Activated T-helper 2 cell treated with anti-CD3 and anti-CD28 coated beads, Interferon-gamma antibody, Interleukin-2, Interleukin-4, amounts not matched to agents 10 μg/mL and 5 μg/mL and 100 μg/mL, durations not matched to agents 14 hours and 24 hours and 36 hours (primary cell): ENCODE measurements at regions of chr2 and their contacts with region 1.

Region 1: GRCh38 chr2:174487108-174487819 is 435 bp upstream of the GPR155 start:
- DNase-seq: peak; percentile 85
- H3K4me3 Mint-ChIP-seq: peak overlapping the region; percentile 87
- H3K27ac Mint-ChIP-seq: peak overlapping the region; percentile 79
- H3K4me1 Mint-ChIP-seq: peaks cover 52% of the 10 kb centered on the region
- H3K27me3 Mint-ChIP-seq: peaks cover 7% of the 10 kb centered on the region

Region 2: GRCh38 chr2:174248187-174248997 is 238.9 kb before region 1 on chr2 and contains the start of gene OLA1:
- intact Hi-C with region 1: loop called (anchors 5 kb)
- DNase-seq: peak; percentile 94
- H3K4me3 Mint-ChIP-seq: peak within 1 kb of the TSS; percentile 87
- H3K27ac Mint-ChIP-seq: peak within 1 kb of the TSS; percentile 86
- H3K4me1 Mint-ChIP-seq: peaks cover 29% of the 10 kb centered on the region
- H3K27me3 Mint-ChIP-seq: no peaks in the 10 kb centered on the region
- total RNA-seq, gene OLA1: 148 and 150 TPM in 2 replicates